Endothelial cell of umbilical vein (primary cell): ENCODE measurements at regions of chr13 and their contacts with region 1.

Region 1: GRCh38 chr13:52428295-52428694 is 22.1 kb downstream of the VPS36 start:
- DNase-seq: peak; percentile 97
- H3K4me3 ChIP-seq: no peak overlapping the region
- H3K27ac ChIP-seq: peak overlapping the region; percentile 96
- H3K4me1 ChIP-seq: peaks cover 40% of the 10 kb centered on the region
- H3K27me3 ChIP-seq: no peaks in the 10 kb centered on the region
- CTCF ChIP-seq: no peak
- POLR2A ChIP-seq: peak; percentile 81

Region 2: DNA sequence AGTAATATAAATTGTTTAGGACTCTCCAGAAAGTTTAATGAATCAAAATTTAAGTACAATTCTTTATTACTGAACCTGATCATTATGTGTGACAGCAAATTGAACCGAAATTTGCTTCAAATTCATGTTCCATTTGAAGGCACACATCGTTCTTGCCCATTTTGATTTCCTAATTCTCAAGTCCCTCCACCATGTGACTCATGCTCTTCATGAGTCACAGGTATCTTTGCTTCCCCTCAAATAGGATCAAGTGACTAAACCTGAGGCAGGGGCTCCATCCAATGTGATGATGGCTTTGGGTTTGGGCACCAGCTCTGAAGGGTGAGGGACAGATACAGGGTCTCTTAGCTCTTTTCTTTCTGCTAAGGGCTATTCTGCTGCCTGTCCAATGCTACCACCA is 108.4 kb before region 1 on chr13:
- CTCF ChIA-PET with region 1: no interaction called
- POLR2A ChIA-PET with region 1: no interaction called
- dilution Hi-C with region 1: no loop called
- intact Hi-C with region 1: no loop called
- DNase-seq: no peak
- H3K4me3 ChIP-seq: no peak overlapping the region
- H3K27ac ChIP-seq: no peak overlapping the region
- H3K4me1 ChIP-seq: no peaks in the 10 kb centered on the region
- H3K27me3 ChIP-seq: peaks cover 2 to 7% of the 10 kb centered on the region in 2 experiments
- CTCF ChIP-seq: no peak
- POLR2A ChIP-seq: no peak

Region 3: DNA sequence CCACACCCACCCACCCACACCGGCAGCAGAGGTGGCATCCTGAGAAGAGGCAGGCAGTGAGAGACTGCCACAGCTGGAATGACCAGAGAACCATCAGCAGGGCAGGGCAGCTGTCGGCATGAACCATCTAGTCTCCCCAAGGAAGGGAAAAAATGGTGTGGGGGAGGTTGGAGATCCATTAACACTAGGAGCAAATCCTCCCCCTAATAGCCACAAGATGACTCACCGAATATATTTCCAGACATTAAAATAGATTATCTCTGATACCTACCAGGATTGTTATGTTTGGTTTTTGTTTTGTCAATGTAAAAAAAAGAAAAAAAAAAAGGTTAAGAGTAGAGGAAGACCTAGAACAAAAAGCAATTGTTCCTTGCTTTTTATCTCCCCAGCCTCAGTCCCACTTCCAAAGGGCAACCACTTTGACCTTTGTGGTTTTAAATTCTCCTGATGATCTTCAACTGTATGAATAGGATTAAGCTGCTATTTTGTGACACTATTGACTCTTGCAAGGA is 56.5 kb before region 1 on chr13:
- CTCF ChIA-PET with region 1: no interaction called
- POLR2A ChIA-PET with region 1: no interaction called
- dilution Hi-C with region 1: no loop called
- intact Hi-C with region 1: loop called (anchors 2 kb)
- DNase-seq: peak; percentile 76
- H3K4me3 ChIP-seq: no peak overlapping the region
- H3K27ac ChIP-seq: no peak overlapping the region
- H3K4me1 ChIP-seq: peaks cover 34% of the 10 kb centered on the region
- H3K27me3 ChIP-seq: no peaks in the 10 kb centered on the region
- CTCF ChIP-seq: no peak
- POLR2A ChIP-seq: no peak

Region 4: GRCh38 chr13:52405767-52406494 is 22.4 kb before region 1 on chr13 and contains the start of gene THSD1:
- CTCF ChIA-PET with region 1: interaction called, 13 read pairs
- POLR2A ChIA-PET with region 1: interaction called, 9 read pairs
- dilution Hi-C with region 1: no loop called
- intact Hi-C with region 1: loop called (anchors 1 kb)
- DNase-seq: peak; percentile 71
- H3K4me3 ChIP-seq: peak within 1 kb of the TSS; percentile 71 to 99 (median 74)
- H3K27ac ChIP-seq: peak within 1 kb of the TSS; percentile 81
- H3K4me1 ChIP-seq: peaks cover 21% of the 10 kb centered on the region
- H3K27me3 ChIP-seq: no peaks in the 10 kb centered on the region
- CTCF ChIP-seq: no peak
- POLR2A ChIP-seq: peak; percentile 81
- total RNA-seq, gene THSD1: 25.2 and 25.4 TPM in 2 replicates

Region 5: DNA sequence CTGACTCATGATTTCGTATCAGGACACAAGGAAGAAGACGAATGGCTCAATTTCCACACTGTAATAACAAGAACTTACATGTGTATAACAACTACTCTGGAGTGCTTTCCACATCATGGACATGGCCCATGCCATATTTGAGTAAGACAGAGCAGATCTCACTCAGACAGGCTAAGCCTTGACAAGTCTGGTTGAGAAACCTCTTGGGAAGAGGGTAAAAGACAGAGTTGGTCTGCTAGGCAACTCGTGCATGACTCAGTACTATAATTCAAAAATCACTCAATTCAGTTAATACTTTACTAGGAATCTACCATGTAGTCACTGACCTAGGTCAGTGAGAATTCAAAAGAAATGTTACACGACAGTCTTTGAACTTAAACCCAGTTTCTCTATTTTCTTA is 16.7 kb before region 1 on chr13:
- CTCF ChIA-PET with region 1: interaction called, 13 read pairs
- POLR2A ChIA-PET with region 1: no interaction called
- dilution Hi-C with region 1: no loop called
- intact Hi-C with region 1: loop called (anchors 1 kb)
- DNase-seq: no peak
- H3K4me3 ChIP-seq: no peak overlapping the region
- H3K27ac ChIP-seq: no peak overlapping the region
- H3K4me1 ChIP-seq: peaks cover 17% of the 10 kb centered on the region
- H3K27me3 ChIP-seq: no peaks in the 10 kb centered on the region
- CTCF ChIP-seq: no peak
- POLR2A ChIP-seq: no peak